MCF 10A (cell line): ENCODE measurements at regions of chr6 and their contacts with region 1.

Region 1: DNA sequence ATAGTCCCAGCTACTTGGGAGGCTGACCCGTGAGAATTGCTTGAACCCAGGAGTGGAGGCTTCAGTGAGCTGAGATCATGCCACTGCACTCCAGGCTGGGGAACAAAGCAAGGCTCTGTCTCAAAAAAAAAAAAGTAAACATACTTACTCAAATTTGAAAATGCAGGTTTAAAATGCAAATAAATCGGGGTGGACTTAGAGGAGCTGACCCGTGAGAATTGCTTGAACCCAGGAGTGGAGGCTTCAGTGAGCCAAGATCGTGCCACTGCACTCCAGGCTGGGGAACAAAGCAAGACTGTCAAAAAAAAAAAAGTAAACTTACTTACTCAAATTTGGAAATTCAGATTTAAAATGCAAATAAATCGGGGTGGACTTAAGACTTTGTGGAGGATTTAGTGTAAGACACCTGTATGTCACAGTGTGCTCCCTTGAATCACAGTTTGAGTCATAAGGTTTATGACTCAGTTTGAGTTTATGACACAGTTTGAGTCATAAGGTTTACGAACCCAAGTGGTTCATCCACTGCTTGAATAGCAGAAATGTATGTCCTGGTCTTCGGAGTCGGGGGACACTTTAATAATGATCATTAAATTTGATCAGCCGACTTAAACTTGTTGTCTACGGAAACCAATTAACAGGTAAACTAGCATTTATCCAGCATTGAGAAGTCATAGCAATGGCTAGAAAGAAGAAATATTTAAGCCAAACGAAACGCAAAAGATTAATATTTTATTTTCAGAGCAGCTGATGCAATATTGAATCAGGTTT is 6.7 kb upstream of the MRPS10 start:
- DNase-seq: peak; percentile 93
- H3K4me3 Mint-ChIP-seq: peak overlapping the region; percentile 73
- H3K27ac Mint-ChIP-seq: peak overlapping the region; percentile 92
- H3K4me1 Mint-ChIP-seq: peaks cover 44% of the 10 kb centered on the region
- H3K27me3 Mint-ChIP-seq: no peaks in the 10 kb centered on the region
- CTCF ChIP-seq: no peak

Region 2: DNA sequence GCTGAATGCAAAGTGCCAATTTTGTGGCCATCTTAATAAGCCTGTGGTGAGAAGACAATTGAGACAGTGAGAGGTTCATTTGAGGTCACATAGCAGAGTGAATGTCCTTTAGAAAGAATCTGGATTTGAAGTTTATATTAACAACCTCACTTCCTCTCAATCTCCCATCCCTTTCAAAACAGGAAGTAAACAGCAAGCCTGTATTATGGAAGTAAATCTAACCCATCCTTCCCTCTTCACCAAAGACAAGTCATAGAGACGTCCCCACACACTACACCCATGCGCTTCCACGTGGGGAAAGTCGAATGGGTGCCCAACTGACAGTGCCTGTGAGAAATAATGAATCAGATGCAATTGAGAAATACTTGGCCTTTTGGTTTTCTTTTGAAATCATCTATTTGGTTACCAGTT is 254.0 kb before region 1 on chr6:
- CTCF ChIA-PET with region 1: no interaction called
- POLR2A ChIA-PET with region 1: no interaction called
- intact Hi-C with region 1: no loop called
- DNase-seq: peak; percentile 84
- H3K4me3 Mint-ChIP-seq: no peak overlapping the region
- H3K27ac Mint-ChIP-seq: no peak overlapping the region
- H3K4me1 Mint-ChIP-seq: peaks cover 16% of the 10 kb centered on the region
- H3K27me3 Mint-ChIP-seq: no peaks in the 10 kb centered on the region
- CTCF ChIP-seq: no peak

Region 3: GRCh38 chr6:42050266-42051032 is 174.0 kb before region 1 on chr6 and contains the start of gene TAF8:
- CTCF ChIA-PET with region 1: interaction called, 4 read pairs
- POLR2A ChIA-PET with region 1: interaction called, 14 read pairs
- intact Hi-C with region 1: no loop called
- DNase-seq: peak; percentile 93
- H3K4me3 Mint-ChIP-seq: peak within 1 kb of the TSS; percentile 91
- H3K27ac Mint-ChIP-seq: peak within 1 kb of the TSS; percentile 94
- H3K4me1 Mint-ChIP-seq: peaks cover 22% of the 10 kb centered on the region
- H3K27me3 Mint-ChIP-seq: no peaks in the 10 kb centered on the region
- CTCF ChIP-seq: no peak
- total RNA-seq, gene TAF8: 23.8 and 25.8 TPM in 2 replicates

Region 4: GRCh38 chr6:42190554-42191183 is 33.7 kb before region 1 on chr6:
- CTCF ChIA-PET with region 1: no interaction called
- POLR2A ChIA-PET with region 1: interaction called, 10 read pairs
- intact Hi-C with region 1: no loop called
- DNase-seq: no peak
- H3K4me3 Mint-ChIP-seq: no peak overlapping the region
- H3K27ac Mint-ChIP-seq: no peak overlapping the region
- H3K4me1 Mint-ChIP-seq: no peaks in the 10 kb centered on the region
- H3K27me3 Mint-ChIP-seq: no peaks in the 10 kb centered on the region
- CTCF ChIP-seq: no peak

Region 5: GRCh38 chr6:42239351-42240055 is 15.1 kb after region 1 on chr6:
- CTCF ChIA-PET with region 1: interaction called, 5 read pairs
- POLR2A ChIA-PET with region 1: interaction called, 56 read pairs
- intact Hi-C with region 1: no loop called
- DNase-seq: peak; percentile 85
- H3K4me3 Mint-ChIP-seq: peak overlapping the region; percentile 24
- H3K27ac Mint-ChIP-seq: peak overlapping the region; percentile 89
- H3K4me1 Mint-ChIP-seq: peaks cover 23% of the 10 kb centered on the region
- H3K27me3 Mint-ChIP-seq: no peaks in the 10 kb centered on the region
- CTCF ChIP-seq: no peak

Region 6: GRCh38 chr6:42279144-42279781 is 54.9 kb after region 1 on chr6:
- CTCF ChIA-PET with region 1: no interaction called
- POLR2A ChIA-PET with region 1: interaction called, 22 read pairs
- intact Hi-C with region 1: no loop called
- DNase-seq: peak; percentile 90
- H3K4me3 Mint-ChIP-seq: peak overlapping the region; percentile 52
- H3K27ac Mint-ChIP-seq: peak overlapping the region; percentile 70
- H3K4me1 Mint-ChIP-seq: peaks cover 34% of the 10 kb centered on the region
- H3K27me3 Mint-ChIP-seq: no peaks in the 10 kb centered on the region
- CTCF ChIP-seq: no peak

Region 7: DNA sequence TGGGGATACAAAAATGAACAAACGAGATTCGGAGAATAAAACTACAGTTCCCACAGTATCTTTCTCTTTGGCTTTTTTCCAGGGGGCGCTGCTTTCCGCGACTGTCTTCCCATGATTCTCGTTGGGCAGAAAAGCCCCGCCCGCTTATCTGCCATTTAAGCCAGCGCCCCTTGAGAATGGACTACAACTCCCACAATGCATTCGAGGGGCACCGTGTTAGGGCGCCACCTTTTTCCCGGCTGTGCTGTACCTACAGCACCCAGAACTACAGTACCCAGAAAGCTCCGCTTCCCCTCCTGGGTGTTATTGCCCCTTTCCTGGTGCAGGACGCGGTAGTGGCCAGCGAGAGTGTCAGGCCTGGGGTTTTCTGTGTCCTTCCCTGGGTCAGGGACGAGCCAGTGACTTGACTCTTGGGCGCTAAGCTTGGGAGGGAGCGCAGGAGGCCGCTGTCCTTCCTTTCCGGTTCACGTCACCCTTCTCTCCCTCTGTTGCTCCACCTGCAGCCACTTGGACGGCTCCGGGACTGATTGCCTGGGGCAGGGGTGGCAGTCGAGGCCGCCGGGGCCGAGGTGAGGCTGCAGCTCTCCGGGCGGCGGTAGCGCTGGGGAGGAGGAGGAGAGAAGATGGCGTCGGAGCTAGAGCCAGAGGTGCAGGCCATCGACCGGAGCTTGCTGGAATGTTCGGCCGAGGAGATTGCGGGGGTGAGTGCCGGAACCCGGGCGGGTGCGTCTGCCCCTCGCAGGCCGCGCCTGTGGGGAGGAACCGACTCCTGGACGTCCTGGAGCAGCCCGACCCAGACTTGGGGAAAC is 339.5 kb after region 1 on chr6 and contains the start of gene UBR2:
- CTCF ChIA-PET with region 1: interaction called, 4 read pairs
- POLR2A ChIA-PET with region 1: interaction called, 32 read pairs
- intact Hi-C with region 1: no loop called
- DNase-seq: peak; percentile 99
- H3K4me3 Mint-ChIP-seq: peak within 1 kb of the TSS; percentile 79
- H3K27ac Mint-ChIP-seq: peak within 1 kb of the TSS; percentile 81
- H3K4me1 Mint-ChIP-seq: peaks cover 18% of the 10 kb centered on the region
- H3K27me3 Mint-ChIP-seq: no peaks in the 10 kb centered on the region
- CTCF ChIP-seq: no peak
- total RNA-seq, gene UBR2: 20.1 and 23.2 TPM in 2 replicates

Region 8: GRCh38 chr6:42808492-42809483 is 584.4 kb after region 1 on chr6:
- CTCF ChIA-PET with region 1: no interaction called
- POLR2A ChIA-PET with region 1: no interaction called
- intact Hi-C with region 1: no loop called
- DNase-seq: no peak
- H3K4me3 Mint-ChIP-seq: no peak overlapping the region
- H3K27ac Mint-ChIP-seq: no peak overlapping the region
- H3K4me1 Mint-ChIP-seq: no peaks in the 10 kb centered on the region
- H3K27me3 Mint-ChIP-seq: no peaks in the 10 kb centered on the region
- CTCF ChIP-seq: no peak